CD4-positive, alpha-beta memory T cell (primary cell): ENCODE measurements at regions of chr1 and their contacts with region 1.

Region 1: DNA sequence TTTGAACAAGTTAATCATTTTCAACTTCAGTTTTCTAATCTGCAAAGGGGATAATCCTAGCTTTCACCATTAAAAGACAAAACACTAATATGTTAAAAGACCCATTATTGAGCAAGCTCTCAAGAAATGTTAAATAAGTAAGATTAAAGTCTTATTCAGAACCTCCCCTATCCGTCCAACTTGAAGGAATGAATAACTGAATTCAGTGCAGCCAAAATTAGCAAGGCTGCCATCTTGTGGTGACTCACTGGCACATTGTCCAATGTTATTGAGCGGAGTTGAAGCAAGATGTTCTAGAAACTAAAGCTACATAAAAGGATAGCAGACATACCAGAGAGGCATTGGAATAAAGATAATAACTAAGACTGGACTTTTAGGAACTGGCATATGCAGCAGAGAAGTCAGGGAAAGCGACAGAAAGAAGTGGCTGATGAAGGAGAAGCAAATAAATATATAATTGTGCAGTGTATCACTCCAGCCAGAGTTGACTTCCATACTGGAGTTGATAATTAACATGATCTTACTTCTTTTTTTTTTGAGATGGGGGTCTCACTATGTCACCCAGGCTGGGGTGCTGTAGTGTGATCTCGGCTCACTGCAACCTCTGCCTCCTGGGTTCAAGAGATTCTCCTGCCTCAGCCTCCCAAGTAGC is 8.2 kb upstream of the CAP1 start:
- DNase-seq: peak; percentile 44 to 53 (median 51)
- H3K4me3 ChIP-seq: no peak overlapping the region
- H3K4me3 Mint-ChIP-seq: peak overlapping the region in 1 of 8 donors; percentile 32
- H3K27ac ChIP-seq: no peak overlapping the region
- H3K27ac Mint-ChIP-seq: peak overlapping the region in 6 of 7 donors; percentile 5 to 92 (median 60)
- H3K4me1 ChIP-seq: peaks cover 48% of the 10 kb centered on the region
- H3K4me1 Mint-ChIP-seq: peaks cover 25 to 58% (median 43%) of the 10 kb centered on the region in 4 donors
- H3K27me3 ChIP-seq: no peaks in the 10 kb centered on the region
- H3K27me3 Mint-ChIP-seq: no peaks in the 10 kb centered on the region

Region 2: DNA sequence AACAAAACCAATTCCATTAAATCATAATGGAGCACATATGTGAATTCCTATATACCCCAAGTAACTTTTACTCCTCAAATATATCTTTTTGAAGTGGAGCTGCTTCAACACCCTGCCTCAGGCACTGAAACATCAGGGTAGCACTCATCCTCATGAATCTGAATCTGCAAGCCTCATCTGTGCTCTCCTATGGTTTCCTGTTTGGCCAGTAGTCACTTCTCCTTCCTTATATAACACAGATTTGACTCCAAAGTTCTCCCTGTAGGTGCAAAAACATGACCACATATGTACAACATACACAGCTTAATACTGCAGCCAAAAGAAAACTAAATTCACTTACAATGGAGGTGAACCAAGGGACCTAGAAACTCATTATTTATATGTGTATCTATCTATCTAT is 156.2 kb before region 1 on chr1:
- CTCF ChIA-PET with region 1: no interaction called
- POLR2A ChIA-PET with region 1: no interaction called
- intact Hi-C with region 1: no loop called
- DNase-seq: no peak
- H3K4me3 ChIP-seq: no peak overlapping the region
- H3K4me3 Mint-ChIP-seq: no peak overlapping the region
- H3K27ac ChIP-seq: no peak overlapping the region
- H3K27ac Mint-ChIP-seq: peak overlapping the region in 2 of 7 donors; percentile 6 to 65
- H3K4me1 ChIP-seq: peaks cover 6% of the 10 kb centered on the region
- H3K4me1 Mint-ChIP-seq: peaks cover 22 to 60% (median 45%) of the 10 kb centered on the region in 4 donors
- H3K27me3 ChIP-seq: no peaks in the 10 kb centered on the region
- H3K27me3 Mint-ChIP-seq: no peaks in the 10 kb centered on the region

Region 3: DNA sequence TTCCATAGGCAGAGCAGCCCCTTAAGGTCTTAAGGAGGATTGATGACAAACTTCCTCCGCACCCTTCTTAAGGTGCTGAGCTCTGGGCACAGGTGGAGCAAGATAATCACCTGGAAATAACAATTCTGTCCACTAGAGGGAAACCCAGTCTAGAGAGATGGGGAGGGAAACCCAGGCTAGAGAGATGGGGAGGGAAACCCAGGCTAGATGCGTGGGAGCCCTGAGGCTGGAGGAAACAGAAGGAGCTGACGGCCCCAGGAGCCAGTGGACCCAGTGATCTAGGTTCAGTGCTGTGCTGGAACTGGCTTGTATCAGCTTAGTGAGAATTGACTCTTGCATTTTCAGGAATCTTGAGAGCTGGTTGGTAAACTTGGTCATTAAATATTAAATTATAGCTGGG is 112.8 kb before region 1 on chr1:
- CTCF ChIA-PET with region 1: interaction called, 107 read pairs
- POLR2A ChIA-PET with region 1: interaction called, 3 read pairs
- intact Hi-C with region 1: loop called (anchors 1 kb)
- DNase-seq: peak; percentile 48 to 70 (median 67)
- H3K4me3 ChIP-seq: no peak overlapping the region
- H3K4me3 Mint-ChIP-seq: no peak overlapping the region
- H3K27ac ChIP-seq: no peak overlapping the region
- H3K27ac Mint-ChIP-seq: no peak overlapping the region
- H3K4me1 ChIP-seq: no peaks in the 10 kb centered on the region
- H3K4me1 Mint-ChIP-seq: no peaks in the 10 kb centered on the region
- H3K27me3 ChIP-seq: no peaks in the 10 kb centered on the region
- H3K27me3 Mint-ChIP-seq: peaks cover 3 to 5% of the 10 kb centered on the region in 2 donors

Region 4: GRCh38 chr1:39973503-39974135 is 58.7 kb before region 1 on chr1:
- CTCF ChIA-PET with region 1: interaction called, 53 read pairs
- POLR2A ChIA-PET with region 1: no interaction called
- intact Hi-C with region 1: loop called (anchors 1 kb)
- DNase-seq: peak; percentile 65 to 68 (median 66)
- H3K4me3 ChIP-seq: no peak overlapping the region
- H3K4me3 Mint-ChIP-seq: peak overlapping the region in 1 of 8 donors; percentile 43
- H3K27ac ChIP-seq: no peak overlapping the region
- H3K27ac Mint-ChIP-seq: peak overlapping the region in 1 of 7 donors; percentile 43
- H3K4me1 ChIP-seq: no peaks in the 10 kb centered on the region
- H3K4me1 Mint-ChIP-seq: peaks cover 5 to 7% (median 6%) of the 10 kb centered on the region in 4 donors
- H3K27me3 ChIP-seq: no peaks in the 10 kb centered on the region
- H3K27me3 Mint-ChIP-seq: no peaks in the 10 kb centered on the region

Region 5: DNA sequence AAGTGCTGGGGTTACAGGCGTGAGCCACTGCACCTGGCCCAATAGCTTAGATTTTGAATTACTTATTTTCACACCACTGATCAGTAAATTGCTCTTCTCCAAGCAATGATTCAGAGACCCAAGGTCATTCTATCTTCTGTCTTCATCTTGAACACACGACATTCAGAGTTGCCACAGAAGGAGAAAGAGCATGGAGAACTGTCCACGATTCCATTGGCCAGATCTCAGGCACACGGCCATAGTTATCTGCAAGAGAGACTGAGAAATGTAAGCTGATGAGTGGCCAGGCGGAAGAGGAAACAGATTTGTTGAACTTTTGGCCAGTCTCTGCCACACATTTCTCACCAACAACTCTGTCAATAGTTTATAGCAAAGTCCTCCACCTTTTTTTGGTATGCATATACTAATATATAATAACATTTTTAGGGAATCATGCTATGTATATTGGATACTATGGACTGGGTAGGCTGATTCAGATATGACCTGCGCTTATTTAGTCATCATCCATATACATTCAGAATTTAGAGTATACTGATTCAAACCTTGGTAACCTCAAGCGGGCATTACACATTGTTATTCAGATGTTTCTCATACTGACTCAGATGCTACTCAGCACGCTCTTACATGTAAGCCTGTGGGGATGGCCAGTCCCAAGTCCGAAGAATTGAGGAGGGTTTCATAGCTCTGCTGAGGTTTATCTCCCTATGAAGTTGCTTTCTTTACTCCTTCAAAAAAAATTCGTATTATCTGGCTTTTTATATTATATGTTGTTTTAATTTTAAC is 17.4 kb before region 1 on chr1:
- CTCF ChIA-PET with region 1: interaction called, 26 read pairs
- POLR2A ChIA-PET with region 1: no interaction called
- intact Hi-C with region 1: no loop called
- DNase-seq: no peak
- H3K4me3 ChIP-seq: no peak overlapping the region
- H3K4me3 Mint-ChIP-seq: peak overlapping the region in 3 of 8 donors; percentile 4 to 39 (median 8)
- H3K27ac ChIP-seq: peak overlapping the region; percentile 12
- H3K27ac Mint-ChIP-seq: peak overlapping the region; percentile 31 to 83 (median 66)
- H3K4me1 ChIP-seq: peaks cover 23% of the 10 kb centered on the region
- H3K4me1 Mint-ChIP-seq: peaks cover 12 to 35% (median 16%) of the 10 kb centered on the region in 4 donors
- H3K27me3 ChIP-seq: no peaks in the 10 kb centered on the region
- H3K27me3 Mint-ChIP-seq: no peaks in the 10 kb centered on the region

Region 6: DNA sequence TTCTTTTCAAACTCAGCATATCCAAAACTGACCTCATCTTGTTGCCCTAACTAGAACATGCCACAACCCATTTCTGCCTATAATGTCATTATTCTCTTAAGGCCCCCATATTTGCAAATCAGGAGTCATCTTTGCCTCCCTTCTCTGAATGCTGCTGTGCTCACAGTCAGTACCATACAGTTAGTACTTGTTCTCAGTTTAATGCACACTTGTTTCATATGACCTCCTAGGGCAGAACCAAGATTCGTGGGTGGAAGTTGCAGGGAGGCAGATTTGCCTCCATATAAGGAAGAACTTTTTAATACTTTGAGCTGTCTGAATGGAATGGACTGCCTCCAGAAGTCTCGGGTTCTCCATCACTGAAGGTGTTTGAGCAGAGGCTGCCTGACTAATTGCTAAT is 17.4 kb after region 1 on chr1:
- CTCF ChIA-PET with region 1: interaction called, 10 read pairs
- POLR2A ChIA-PET with region 1: interaction called, 5 read pairs
- intact Hi-C with region 1: no loop called
- DNase-seq: no peak
- H3K4me3 ChIP-seq: no peak overlapping the region
- H3K4me3 Mint-ChIP-seq: peak overlapping the region in 7 of 8 donors; percentile 25 to 87 (median 63)
- H3K27ac ChIP-seq: peak overlapping the region; percentile 7
- H3K27ac Mint-ChIP-seq: peak overlapping the region; percentile 37 to 95 (median 86)
- H3K4me1 ChIP-seq: peaks cover 93% of the 10 kb centered on the region
- H3K4me1 Mint-ChIP-seq: peaks cover 56 to 95% (median 79%) of the 10 kb centered on the region in 4 donors
- H3K27me3 ChIP-seq: no peaks in the 10 kb centered on the region
- H3K27me3 Mint-ChIP-seq: no peaks in the 10 kb centered on the region

Region 7: DNA sequence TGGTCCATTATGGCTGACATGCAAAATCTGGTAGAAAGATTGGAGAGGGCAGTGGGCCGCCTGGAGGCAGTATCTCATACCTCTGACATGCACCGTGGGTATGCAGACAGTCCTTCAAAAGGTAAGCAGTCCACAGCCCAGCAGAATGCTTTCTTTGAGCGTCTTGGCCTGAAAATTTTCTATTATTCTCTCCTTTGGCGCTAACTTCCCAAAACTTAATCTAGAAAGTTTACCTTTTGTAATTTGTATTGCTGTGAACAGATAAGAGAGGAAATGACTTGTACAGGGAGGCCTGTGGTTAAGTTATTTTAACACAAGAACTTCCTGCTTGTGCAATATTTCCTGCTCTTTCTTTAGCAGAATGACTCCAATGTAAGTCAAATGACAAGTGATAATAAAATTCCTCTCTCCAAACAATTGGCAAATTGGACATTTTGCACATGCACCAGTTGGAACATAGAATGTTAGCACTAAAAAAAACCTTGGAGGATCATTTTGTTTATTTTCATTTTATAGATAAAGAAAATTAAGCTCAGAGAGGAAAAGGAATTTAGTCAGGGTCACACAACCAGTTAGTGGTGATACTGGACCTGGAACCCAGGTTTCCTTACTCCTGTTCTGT is 27.1 kb after region 1 on chr1:
- CTCF ChIA-PET with region 1: interaction called, 16 read pairs
- POLR2A ChIA-PET with region 1: interaction called, 115 read pairs
- intact Hi-C with region 1: no loop called
- DNase-seq: peak; percentile 52 to 58 (median 55)
- H3K4me3 ChIP-seq: peak overlapping the region in 1 of 2 donors; percentile 32
- H3K4me3 Mint-ChIP-seq: peak overlapping the region; percentile 58 to 82 (median 79)
- H3K27ac ChIP-seq: peak overlapping the region; percentile 63
- H3K27ac Mint-ChIP-seq: peak overlapping the region; percentile 82 to 95 (median 89)
- H3K4me1 ChIP-seq: peaks cover 90% of the 10 kb centered on the region
- H3K4me1 Mint-ChIP-seq: peaks cover 77 to 92% (median 83%) of the 10 kb centered on the region in 4 donors
- H3K27me3 ChIP-seq: no peaks in the 10 kb centered on the region
- H3K27me3 Mint-ChIP-seq: no peaks in the 10 kb centered on the region

Region 8: GRCh38 chr1:40178200-40178599 is 145.8 kb after region 1 on chr1:
- CTCF ChIA-PET with region 1: no interaction called
- POLR2A ChIA-PET with region 1: no interaction called
- intact Hi-C with region 1: no loop called
- DNase-seq: no peak
- H3K4me3 ChIP-seq: no peak overlapping the region
- H3K4me3 Mint-ChIP-seq: peak overlapping the region in 2 of 8 donors; percentile 18 to 29
- H3K27ac ChIP-seq: no peak overlapping the region
- H3K27ac Mint-ChIP-seq: peak overlapping the region in 2 of 7 donors; percentile 10 to 71
- H3K4me1 ChIP-seq: peaks cover 51% of the 10 kb centered on the region
- H3K4me1 Mint-ChIP-seq: peaks cover 44 to 80% (median 57%) of the 10 kb centered on the region in 4 donors
- H3K27me3 ChIP-seq: no peaks in the 10 kb centered on the region
- H3K27me3 Mint-ChIP-seq: no peaks in the 10 kb centered on the region